Naive thymus-derived CD4-positive, alpha-beta T cell (primary cell): ENCODE measurements at regions of chr9 and their contacts with region 1.

Region 1: DNA sequence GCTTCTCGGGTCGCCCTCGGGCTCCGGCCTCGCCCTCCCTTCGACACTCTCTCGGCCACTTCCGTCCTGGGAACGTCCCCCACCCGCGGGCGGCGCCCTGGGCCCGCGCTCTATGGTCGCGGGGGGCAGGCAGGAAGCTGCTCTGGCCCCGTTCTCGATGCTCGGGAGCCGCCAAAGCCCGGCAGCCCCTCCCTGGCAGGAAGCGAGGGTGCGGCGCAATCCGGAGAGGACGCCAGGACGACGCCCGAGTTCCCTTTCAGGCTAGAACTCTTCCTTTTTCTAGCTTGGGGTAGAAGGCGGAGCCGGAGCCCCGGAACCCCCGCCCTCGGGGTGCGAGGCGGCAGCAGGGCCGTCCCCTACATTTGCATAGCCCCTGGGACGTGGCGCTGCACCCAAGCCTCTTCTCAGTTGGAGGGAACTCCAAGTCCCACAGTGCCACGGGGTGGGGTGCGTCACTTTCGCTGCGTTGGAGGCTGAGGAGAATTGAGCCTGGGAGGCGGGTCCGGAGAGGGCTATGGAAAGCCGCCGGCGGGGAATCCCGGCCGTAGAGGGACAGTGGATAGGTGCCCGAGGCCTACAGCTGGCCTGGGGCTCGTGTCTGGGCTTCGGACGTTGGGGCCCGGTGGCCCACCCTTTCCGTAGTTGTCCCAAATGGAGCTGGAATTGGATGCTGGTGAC is at the starts of genes CREB3 and TLN1:
- DNase-seq: peak; percentile 86 to 98 (median 96)
- ATAC-seq: peak; percentile 94
- H3K4me3 ChIP-seq: peak within 1 kb of the TSS; percentile 98
- H3K4me3 Mint-ChIP-seq: peak within 1 kb of the TSS in 5 of 10 donors; percentile 87 to 97 (median 94)
- H3K27ac ChIP-seq: peak within 1 kb of the TSS; percentile 93
- H3K27ac Mint-ChIP-seq: peak within 1 kb of the TSS in 6 of 9 donors; percentile 80 to 96 (median 92)
- H3K4me1 ChIP-seq: peaks cover 56 to 60% of the 10 kb centered on the region in 2 donors
- H3K4me1 Mint-ChIP-seq: peaks cover 20 to 34% (median 22%) of the 10 kb centered on the region in 7 donors
- H3K27me3 ChIP-seq: no peaks in the 10 kb centered on the region
- H3K27me3 Mint-ChIP-seq: no peaks in the 10 kb centered on the region
- total RNA-seq, gene CREB3: 13.4 to 22.1 (median 20.9) TPM
- total RNA-seq, gene TLN1: 191 to 369 (median 241) TPM

Region 2: GRCh38 chr9:34646211-34647083 is 1085.8 kb before region 1 on chr9 and contains the start of gene GALT:
- CTCF ChIA-PET with region 1: no interaction called
- POLR2A ChIA-PET with region 1: interaction called, 4 read pairs
- intact Hi-C with region 1: loop called in 1 of 2 experiments (anchors 2 kb)
- DNase-seq: peak; percentile 82 to 98 (median 93)
- ATAC-seq: peak; percentile 96
- H3K4me3 ChIP-seq: peak within 1 kb of the TSS; percentile 90
- H3K4me3 Mint-ChIP-seq: peak within 1 kb of the TSS; percentile 82 to 96 (median 92)
- H3K27ac ChIP-seq: peak within 1 kb of the TSS; percentile 87
- H3K27ac Mint-ChIP-seq: peak within 1 kb of the TSS; percentile 86 to 94 (median 90)
- H3K4me1 ChIP-seq: peaks cover 20 to 23% of the 10 kb centered on the region in 2 donors
- H3K4me1 Mint-ChIP-seq: peaks cover 18 to 48% (median 34%) of the 10 kb centered on the region in 7 donors
- H3K27me3 ChIP-seq: no peaks in the 10 kb centered on the region
- H3K27me3 Mint-ChIP-seq: no peaks in the 10 kb centered on the region
- total RNA-seq, gene GALT: 126 to 217 (median 162) TPM

Region 3: GRCh38 chr9:35096035-35096849 is 636.0 kb before region 1 on chr9 and contains the start of gene PIGO:
- CTCF ChIA-PET with region 1: no interaction called
- POLR2A ChIA-PET with region 1: no interaction called
- intact Hi-C with region 1: loop called in 1 of 2 experiments (anchors 1 kb)
- DNase-seq: peak; percentile 85 to 94 (median 92)
- ATAC-seq: peak; percentile 96
- H3K4me3 ChIP-seq: peak within 1 kb of the TSS; percentile 97
- H3K4me3 Mint-ChIP-seq: peak within 1 kb of the TSS; percentile 81 to 90 (median 86)
- H3K27ac ChIP-seq: peak within 1 kb of the TSS; percentile 99
- H3K27ac Mint-ChIP-seq: peak within 1 kb of the TSS; percentile 77 to 96 (median 94)
- H3K4me1 ChIP-seq: peaks cover 8 to 11% of the 10 kb centered on the region in 2 donors
- H3K4me1 Mint-ChIP-seq: peaks cover 25 to 50% (median 38%) of the 10 kb centered on the region in 7 donors
- H3K27me3 ChIP-seq: no peaks in the 10 kb centered on the region
- H3K27me3 Mint-ChIP-seq: no peaks in the 10 kb centered on the region
- total RNA-seq, gene PIGO: 27.1 to 36.0 (median 29.9) TPM

Region 4: DNA sequence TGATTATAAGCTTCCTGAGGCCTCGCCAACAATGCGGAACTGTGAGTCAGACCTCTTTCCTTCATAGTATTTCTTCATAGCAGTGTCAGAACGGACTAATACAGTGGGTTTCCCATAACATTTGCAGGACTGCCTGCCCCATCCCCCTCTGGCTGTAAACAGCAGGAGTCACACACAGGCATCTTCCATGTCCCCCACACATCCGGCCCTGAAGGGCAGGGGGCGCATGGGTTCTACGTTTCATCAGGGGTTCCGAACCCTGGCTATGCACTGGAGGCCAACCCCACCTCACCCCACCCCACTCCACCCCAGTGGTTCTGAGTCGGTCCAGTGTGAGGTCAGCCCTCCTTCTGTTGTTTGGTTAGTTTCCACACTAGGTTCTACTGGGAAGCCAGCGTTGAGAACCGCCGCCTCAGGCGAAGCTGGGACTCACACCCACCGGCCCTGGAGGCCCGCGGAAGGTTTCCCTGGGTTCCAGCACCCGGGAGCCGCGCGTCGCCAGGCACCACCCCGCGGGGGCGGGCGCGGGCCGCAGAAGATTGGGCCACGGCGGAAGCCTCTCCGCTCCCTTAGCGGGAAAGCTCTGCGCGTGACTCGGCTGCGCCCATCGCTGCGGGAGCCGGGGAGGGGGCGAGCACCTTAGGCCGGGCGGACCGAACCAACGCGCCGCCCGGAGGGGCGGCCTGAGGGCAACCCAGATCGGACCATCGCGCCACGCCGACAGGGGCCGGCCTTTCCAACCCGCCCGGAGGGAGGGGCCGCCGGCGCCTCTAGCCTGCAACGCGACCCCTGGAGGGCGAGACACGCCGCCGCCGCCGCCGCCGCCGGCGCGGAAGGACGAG is 242.7 kb before region 1 on chr9 and contains the start of gene RUSC2:
- CTCF ChIA-PET with region 1: no interaction called
- POLR2A ChIA-PET with region 1: no interaction called
- intact Hi-C with region 1: loop called (anchors 1 to 10 kb)
- DNase-seq: peak; percentile 12 to 75 (median 43)
- ATAC-seq: peak; percentile 84
- H3K4me3 ChIP-seq: peak within 1 kb of the TSS; percentile 54
- H3K4me3 Mint-ChIP-seq: peak within 1 kb of the TSS; percentile 83 to 96 (median 88)
- H3K27ac ChIP-seq: peak within 1 kb of the TSS; percentile 45
- H3K27ac Mint-ChIP-seq: peak within 1 kb of the TSS in 8 of 9 donors; percentile 22 to 78 (median 60)
- H3K4me1 ChIP-seq: peaks cover 0 to 4% of the 10 kb centered on the region in 2 donors
- H3K4me1 Mint-ChIP-seq: peaks cover 19 to 32% (median 28%) of the 10 kb centered on the region in 7 donors
- H3K27me3 ChIP-seq: no peaks in the 10 kb centered on the region
- H3K27me3 Mint-ChIP-seq: peaks cover 0 to 14% (median 0%) of the 10 kb centered on the region in 5 donors
- total RNA-seq, gene RUSC2: 3.1 to 8.3 (median 5.4) TPM

Region 5: DNA sequence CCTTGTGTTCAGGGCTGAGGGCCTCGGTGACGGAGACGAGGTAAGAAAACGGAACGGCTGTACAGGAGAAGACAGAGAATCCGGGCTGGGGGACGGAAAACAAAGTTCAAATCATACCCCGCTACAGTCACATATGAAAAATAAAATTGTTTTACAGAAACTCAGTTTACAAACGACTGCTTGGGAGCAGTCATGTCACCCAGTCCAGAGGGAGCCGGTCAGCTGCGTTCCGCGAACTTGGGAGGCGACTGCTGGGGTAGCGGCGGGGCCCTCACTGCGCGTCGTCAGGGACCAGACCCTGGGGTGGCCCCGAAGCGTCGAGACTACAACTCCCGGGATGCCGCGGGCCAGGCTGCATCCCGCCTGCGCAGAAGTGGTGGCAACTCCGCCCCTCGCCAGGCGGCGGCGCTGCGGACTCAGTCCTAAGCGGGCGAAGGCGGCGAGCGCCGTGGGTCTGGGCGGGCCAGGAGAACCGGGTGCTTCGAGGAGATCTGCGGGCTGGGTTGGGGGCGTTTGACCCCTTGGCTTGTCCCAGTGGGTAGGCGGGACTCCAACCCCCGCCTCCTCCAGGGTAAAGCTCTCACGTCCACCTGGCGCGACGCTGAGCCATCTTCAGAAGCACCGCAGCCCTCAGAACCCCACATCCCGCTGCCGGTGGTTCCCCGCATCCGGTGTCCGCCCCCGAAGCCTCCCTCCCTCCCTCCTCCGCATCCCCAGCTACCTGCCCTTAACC is 85.6 kb before region 1 on chr9:
- CTCF ChIA-PET with region 1: interaction called, 19 read pairs
- POLR2A ChIA-PET with region 1: interaction called, 89 read pairs
- intact Hi-C with region 1: loop called (anchors 1 kb)
- DNase-seq: peak; percentile 87 to 96 (median 93)
- ATAC-seq: peak; percentile 95
- H3K4me3 ChIP-seq: peak overlapping the region; percentile 90
- H3K4me3 Mint-ChIP-seq: peak overlapping the region; percentile 90 to 100 (median 96)
- H3K27ac ChIP-seq: peak overlapping the region; percentile 83
- H3K27ac Mint-ChIP-seq: peak overlapping the region; percentile 86 to 99 (median 96)
- H3K4me1 ChIP-seq: peaks cover 44 to 51% of the 10 kb centered on the region in 2 donors
- H3K4me1 Mint-ChIP-seq: peaks cover 40 to 70% (median 46%) of the 10 kb centered on the region in 7 donors
- H3K27me3 ChIP-seq: no peaks in the 10 kb centered on the region
- H3K27me3 Mint-ChIP-seq: no peaks in the 10 kb centered on the region

Region 6: DNA sequence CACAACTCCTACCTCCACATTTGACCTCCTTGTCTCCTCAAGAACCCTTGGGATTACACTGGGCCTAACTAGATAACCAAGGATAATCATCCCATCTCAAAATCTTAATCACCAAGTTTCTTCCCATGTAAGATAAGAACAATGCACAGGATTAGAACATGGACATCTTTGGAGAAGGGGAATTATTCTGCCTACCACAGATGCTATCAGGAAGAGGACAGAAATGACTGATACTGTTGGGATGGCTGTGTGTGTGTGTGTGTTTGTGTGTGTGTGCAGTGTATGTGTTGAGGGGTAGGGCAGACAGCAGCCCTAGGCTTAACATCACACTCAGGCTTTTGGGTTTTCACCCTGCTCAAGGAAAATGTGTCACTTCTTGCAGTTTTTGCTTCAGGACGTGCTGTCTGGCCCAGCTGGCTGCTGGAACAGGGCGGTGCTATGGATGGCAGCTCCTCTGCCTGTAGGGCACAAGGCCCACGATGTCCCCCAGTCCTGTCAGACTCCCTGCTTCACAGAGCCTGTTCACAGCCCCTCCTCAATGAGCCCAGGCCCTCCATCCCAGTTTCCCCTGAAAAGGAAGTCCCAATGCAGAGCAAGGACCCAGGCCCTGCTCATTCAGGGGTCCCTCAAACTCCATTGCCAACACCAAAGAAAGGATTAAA is 50.8 kb before region 1 on chr9:
- CTCF ChIA-PET with region 1: no interaction called
- POLR2A ChIA-PET with region 1: no interaction called
- intact Hi-C with region 1: no loop called
- DNase-seq: no peak
- ATAC-seq: no peak
- H3K4me3 ChIP-seq: no peak overlapping the region
- H3K4me3 Mint-ChIP-seq: no peak overlapping the region
- H3K27ac ChIP-seq: no peak overlapping the region
- H3K27ac Mint-ChIP-seq: no peak overlapping the region
- H3K4me1 ChIP-seq: no peaks in the 10 kb centered on the region
- H3K4me1 Mint-ChIP-seq: peaks cover 1 to 8% (median 6%) of the 10 kb centered on the region in 7 donors
- H3K27me3 ChIP-seq: no peaks in the 10 kb centered on the region
- H3K27me3 Mint-ChIP-seq: peaks cover 0 to 12% (median under 1%) of the 10 kb centered on the region in 5 donors

Region 7: DNA sequence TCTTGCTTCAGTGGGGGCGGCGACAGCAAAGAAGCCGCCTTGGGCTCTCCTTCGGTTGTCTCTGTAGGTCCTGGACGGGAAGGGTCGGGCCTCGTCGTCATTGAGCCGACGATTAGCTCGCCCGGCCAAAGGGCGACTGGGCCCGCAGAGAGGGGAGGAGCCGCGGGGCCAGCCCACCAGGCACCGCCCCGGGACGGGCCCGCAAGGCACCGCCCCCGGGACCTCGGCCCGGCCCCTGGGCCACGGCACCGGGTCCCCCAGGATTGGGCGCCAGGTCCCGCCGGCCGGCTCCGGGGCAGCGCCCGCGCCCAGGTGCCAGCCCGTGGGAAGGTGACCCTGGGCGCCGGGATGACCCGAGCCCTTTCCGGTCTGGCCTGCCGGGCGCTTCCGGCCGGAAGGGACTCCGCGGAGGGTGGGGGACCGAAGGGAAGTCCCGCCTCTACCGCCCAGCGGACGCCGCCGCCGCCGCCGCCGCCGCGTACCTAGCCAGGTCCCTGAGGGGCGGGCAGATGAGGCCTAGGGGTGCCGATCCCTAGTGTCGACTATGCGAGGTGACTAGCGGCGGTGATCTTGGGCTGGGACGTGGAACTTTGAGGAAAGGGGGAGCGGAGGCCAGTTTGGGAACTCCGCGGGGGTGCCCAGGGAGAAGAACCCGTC is 16.7 kb after region 1 on chr9 and contains the starts of genes GBA2 and RGP1:
- CTCF ChIA-PET with region 1: interaction called, 61 read pairs
- POLR2A ChIA-PET with region 1: interaction called, 50 read pairs
- intact Hi-C with region 1: loop called (anchors 1 kb)
- DNase-seq: peak; percentile 36 to 82 (median 51)
- ATAC-seq: peak; percentile 84
- H3K4me3 ChIP-seq: peak within 1 kb of the TSS; percentile 84
- H3K4me3 Mint-ChIP-seq: peak within 1 kb of the TSS; percentile 89 to 98 (median 96)
- H3K27ac ChIP-seq: peak within 1 kb of the TSS; percentile 87
- H3K27ac Mint-ChIP-seq: peak within 1 kb of the TSS; percentile 89 to 97 (median 96)
- H3K4me1 ChIP-seq: peaks cover 32 to 33% of the 10 kb centered on the region in 2 donors
- H3K4me1 Mint-ChIP-seq: peaks cover 36 to 66% (median 49%) of the 10 kb centered on the region in 7 donors
- H3K27me3 ChIP-seq: no peaks in the 10 kb centered on the region
- H3K27me3 Mint-ChIP-seq: no peaks in the 10 kb centered on the region
- total RNA-seq, gene GBA2: 22.7 to 55.4 (median 49.9) TPM
- total RNA-seq, gene RGP1: 21.2 to 28.8 (median 23.3) TPM

Region 8: GRCh38 chr9:35814841-35815543 is 82.7 kb after region 1 on chr9 and contains the start of gene HINT2:
- CTCF ChIA-PET with region 1: interaction called, 5 read pairs
- POLR2A ChIA-PET with region 1: interaction called, 9 read pairs
- intact Hi-C with region 1: loop called (anchors 1 kb)
- DNase-seq: peak; percentile 84 to 98 (median 96)
- ATAC-seq: peak; percentile 86
- H3K4me3 ChIP-seq: peak within 1 kb of the TSS; percentile 100
- H3K4me3 Mint-ChIP-seq: peak within 1 kb of the TSS; percentile 91 to 100 (median 96)
- H3K27ac ChIP-seq: peak within 1 kb of the TSS; percentile 77
- H3K27ac Mint-ChIP-seq: peak within 1 kb of the TSS; percentile 87 to 99 (median 95)
- H3K4me1 ChIP-seq: peaks cover 19 to 27% of the 10 kb centered on the region in 2 donors
- H3K4me1 Mint-ChIP-seq: peaks cover 23 to 43% (median 38%) of the 10 kb centered on the region in 7 donors
- H3K27me3 ChIP-seq: no peaks in the 10 kb centered on the region
- H3K27me3 Mint-ChIP-seq: peaks cover 0 to 12% (median 0%) of the 10 kb centered on the region in 5 donors
- total RNA-seq, gene HINT2: 14.3 to 50.7 (median 22.2) TPM

Region 9: DNA sequence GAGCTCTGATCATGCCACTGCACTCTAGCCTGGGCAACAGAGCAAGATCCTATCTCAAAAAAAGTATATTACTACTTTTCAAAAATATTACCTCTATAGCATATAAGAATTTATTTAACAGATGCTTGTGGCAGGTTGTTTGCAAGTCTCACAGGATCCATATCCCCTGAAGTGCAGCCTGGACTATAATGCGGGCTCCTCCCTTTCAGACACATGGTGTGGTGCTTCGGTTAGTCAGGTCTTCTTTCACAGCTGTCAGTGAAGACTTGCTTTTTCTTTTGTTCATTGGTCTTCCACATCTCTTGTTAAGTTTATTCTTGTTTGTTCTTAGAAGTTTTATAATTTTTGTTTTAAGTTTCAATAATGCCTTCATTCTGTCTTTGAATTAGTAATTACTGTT is 164.3 kb after region 1 on chr9:
- CTCF ChIA-PET with region 1: no interaction called
- POLR2A ChIA-PET with region 1: no interaction called
- intact Hi-C with region 1: no loop called
- DNase-seq: no peak
- ATAC-seq: no peak
- H3K4me3 ChIP-seq: no peak overlapping the region
- H3K4me3 Mint-ChIP-seq: no peak overlapping the region
- H3K27ac ChIP-seq: no peak overlapping the region
- H3K27ac Mint-ChIP-seq: no peak overlapping the region
- H3K4me1 ChIP-seq: no peaks in the 10 kb centered on the region
- H3K4me1 Mint-ChIP-seq: no peaks in the 10 kb centered on the region
- H3K27me3 ChIP-seq: no peaks in the 10 kb centered on the region
- H3K27me3 Mint-ChIP-seq: peaks cover 6 to 56% (median 18%) of the 10 kb centered on the region in 5 donors

Region 10: DNA sequence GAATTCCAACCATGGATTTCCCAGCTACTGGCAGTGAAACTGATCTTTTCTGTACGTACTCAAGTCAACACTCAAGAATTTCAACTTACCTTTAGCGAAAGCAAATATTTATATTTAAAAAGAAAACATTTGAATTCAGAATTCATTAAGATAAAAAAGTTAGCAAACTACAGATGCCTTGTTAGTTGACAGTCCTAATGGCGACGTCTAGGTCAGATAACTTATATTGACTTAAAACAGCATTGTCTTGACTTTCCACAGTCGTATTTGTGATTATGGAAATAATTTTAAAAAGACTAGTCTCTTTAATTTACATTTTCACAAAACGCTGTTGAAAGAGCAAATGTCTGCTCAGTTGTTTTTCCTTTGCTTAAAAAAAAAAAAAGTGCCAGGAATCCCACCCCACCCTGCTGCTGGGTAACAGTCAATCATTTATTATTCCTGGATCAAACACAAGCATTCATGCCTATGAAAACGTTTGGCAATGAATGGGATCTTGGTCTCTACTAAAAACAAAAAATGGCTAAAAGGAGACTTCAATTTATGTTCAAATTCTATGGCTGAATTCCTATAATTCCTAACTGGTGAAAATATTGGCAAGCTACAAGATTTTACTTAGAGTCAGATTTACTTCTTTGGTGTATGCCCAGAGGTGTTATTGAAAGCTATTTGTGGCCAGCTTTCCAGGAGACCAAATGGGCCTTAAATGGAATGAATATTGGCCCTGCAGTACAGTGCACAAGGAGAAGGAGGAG is 203.7 kb after region 1 on chr9:
- CTCF ChIA-PET with region 1: no interaction called
- POLR2A ChIA-PET with region 1: no interaction called
- intact Hi-C with region 1: no loop called
- DNase-seq: no peak
- ATAC-seq: no peak
- H3K4me3 ChIP-seq: no peak overlapping the region
- H3K4me3 Mint-ChIP-seq: no peak overlapping the region
- H3K27ac ChIP-seq: no peak overlapping the region
- H3K27ac Mint-ChIP-seq: peak overlapping the region in 1 of 9 donors; percentile 7
- H3K4me1 ChIP-seq: peaks cover 8 to 41% of the 10 kb centered on the region in 2 donors
- H3K4me1 Mint-ChIP-seq: peaks cover 37 to 72% (median 67%) of the 10 kb centered on the region in 7 donors
- H3K27me3 ChIP-seq: no peaks in the 10 kb centered on the region
- H3K27me3 Mint-ChIP-seq: peaks cover 0 to 3% (median 0%) of the 10 kb centered on the region in 5 donors